ENCODE measurements at regions of chr21 and their contacts with region 1.

Region 1: GRCh38 chr21:16534408-16535101 is 804.8 kb downstream of the USP25 start:
- DNase-seq: peak; percentile 48
- H3K4me3 ChIP-seq: peak overlapping the region; percentile 31 to 40
- H3K27ac ChIP-seq: peak overlapping the region; percentile 78
- H3K4me1 ChIP-seq: no peaks in the 10 kb centered on the region
- H3K27me3 ChIP-seq: no peaks in the 10 kb centered on the region
- CTCF ChIP-seq: no peak
- POLR2A ChIP-seq: no peak

Region 2: DNA sequence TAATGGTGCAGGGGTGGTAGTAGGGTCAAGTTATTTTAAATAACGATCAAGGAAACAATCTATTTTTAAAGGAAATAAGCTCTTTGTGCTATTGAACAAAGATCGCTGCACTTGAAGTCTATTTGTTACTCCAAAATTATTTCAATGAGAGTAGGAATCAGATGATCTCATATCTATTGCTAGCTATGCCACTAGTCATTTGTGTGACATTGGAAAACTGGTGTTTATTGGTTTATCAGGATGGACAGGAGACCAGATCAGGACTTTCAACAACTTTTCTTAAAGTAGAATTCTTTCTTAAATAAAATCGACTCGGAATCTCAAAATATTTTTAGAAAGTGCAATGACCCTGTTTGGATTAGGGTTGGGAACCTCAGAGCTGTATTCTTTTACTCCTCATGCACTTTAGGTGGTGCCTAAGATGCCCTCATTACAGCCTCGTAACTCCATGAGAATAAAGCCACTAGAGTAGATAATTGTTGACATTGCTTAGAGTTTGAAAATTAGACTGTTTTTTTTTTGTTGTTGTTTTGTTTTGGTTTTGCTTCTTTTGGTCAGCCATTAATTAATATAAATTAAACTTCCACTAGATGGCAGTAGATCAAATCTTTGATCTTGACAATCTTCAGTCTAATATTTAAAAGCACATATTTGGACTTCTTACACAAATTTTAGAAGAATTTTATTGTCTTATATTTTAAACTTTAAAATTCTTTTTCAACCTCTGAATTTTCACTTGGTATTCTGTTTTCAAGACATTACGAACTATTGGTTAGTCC is 452.3 kb before region 1 on chr21:
- intact Hi-C with region 1: loop called (anchors 2 kb)
- DNase-seq: no peak
- H3K4me3 ChIP-seq: no peak overlapping the region
- H3K27ac ChIP-seq: peak overlapping the region; percentile 46 to 56
- H3K4me1 ChIP-seq: no peaks in the 10 kb centered on the region
- H3K27me3 ChIP-seq: no peaks in the 10 kb centered on the region
- CTCF ChIP-seq: peak in 3 of 4 experiments; percentile 41 to 70 (median 47)
- POLR2A ChIP-seq: no peak

Region 3: GRCh38 chr21:16194095-16194787 is 340.3 kb before region 1 on chr21:
- intact Hi-C with region 1: loop called (anchors 10 kb)
- DNase-seq: peak; percentile 59
- H3K4me3 ChIP-seq: peak overlapping the region; percentile 24 to 36
- H3K27ac ChIP-seq: peak overlapping the region; percentile 69 to 78
- H3K4me1 ChIP-seq: no peaks in the 10 kb centered on the region
- H3K27me3 ChIP-seq: no peaks in the 10 kb centered on the region
- CTCF ChIP-seq: no peak
- POLR2A ChIP-seq: no peak

Region 4: DNA sequence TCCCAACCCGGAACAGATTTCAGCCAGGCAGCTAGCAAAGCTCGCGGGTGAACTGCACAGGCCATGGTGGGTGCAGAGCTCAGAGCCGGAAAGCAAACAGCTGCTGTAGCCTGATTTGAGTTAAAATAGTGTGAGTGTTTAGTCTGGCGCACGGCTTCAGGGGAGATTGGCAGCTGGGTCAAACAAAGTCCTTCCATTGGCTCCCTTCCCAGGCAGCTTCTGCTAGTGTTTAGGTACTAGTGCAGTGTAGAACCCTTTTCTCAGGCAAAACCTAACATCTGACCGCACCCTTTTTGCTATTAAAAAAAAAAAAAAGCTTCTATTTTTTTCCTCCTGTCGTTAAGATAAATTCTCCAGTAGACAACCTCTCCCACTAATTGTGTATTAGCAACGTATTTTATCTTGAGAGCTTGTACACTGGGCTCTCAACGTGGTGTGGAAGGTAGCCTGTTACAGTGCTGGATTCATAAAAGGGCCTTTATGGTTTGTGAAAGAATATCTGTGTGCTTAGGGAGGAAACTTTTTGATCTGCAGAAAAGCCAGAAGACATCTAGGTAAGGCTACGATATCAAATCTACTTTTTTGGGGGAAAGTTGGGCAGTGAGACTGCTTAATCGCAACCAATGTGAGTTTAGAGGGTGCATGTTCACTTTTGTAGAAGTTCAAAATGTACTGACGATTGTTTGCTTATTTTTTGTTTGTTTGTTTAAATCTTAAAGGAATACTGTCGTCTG is 115.2 kb before region 1 on chr21:
- intact Hi-C with region 1: loop called (anchors 5 kb)
- DNase-seq: peak; percentile 68
- H3K4me3 ChIP-seq: peak overlapping the region; percentile 35 to 37
- H3K27ac ChIP-seq: peak overlapping the region; percentile 74 to 79
- H3K4me1 ChIP-seq: no peaks in the 10 kb centered on the region
- H3K27me3 ChIP-seq: no peaks in the 10 kb centered on the region
- CTCF ChIP-seq: no peak
- POLR2A ChIP-seq: no peak

Region 5: DNA sequence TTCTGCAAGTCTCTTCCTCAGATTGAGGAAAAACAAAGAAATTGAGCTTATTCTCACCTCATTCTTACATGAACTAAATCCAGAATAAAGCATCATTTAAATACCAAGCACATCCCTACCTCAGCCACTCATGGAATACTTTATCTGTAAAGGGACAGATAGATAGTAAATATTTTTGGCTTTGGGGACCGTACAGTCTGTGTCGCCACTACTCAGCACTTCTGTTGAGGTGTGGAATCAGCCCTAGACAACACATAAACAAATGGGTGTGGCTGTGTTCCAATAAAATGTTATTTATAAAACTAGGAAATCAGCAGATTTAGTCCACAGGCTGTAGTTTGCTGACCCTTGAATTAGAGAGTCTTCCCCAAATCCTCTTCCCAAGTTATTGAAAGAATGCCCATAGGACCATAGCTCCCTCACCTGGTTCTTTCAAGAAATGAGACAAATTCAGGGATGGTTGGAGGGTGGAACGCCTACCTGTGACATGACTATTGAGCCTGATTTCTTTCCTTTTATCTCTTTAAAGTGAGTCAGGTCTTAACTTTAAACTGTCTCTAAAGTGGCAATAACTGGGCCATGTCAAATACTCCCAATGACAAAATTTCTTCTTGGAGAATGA is 73.8 kb after region 1 on chr21:
- intact Hi-C with region 1: no loop called
- DNase-seq: no peak
- H3K4me3 ChIP-seq: no peak overlapping the region
- H3K27ac ChIP-seq: no peak overlapping the region
- H3K4me1 ChIP-seq: no peaks in the 10 kb centered on the region
- H3K27me3 ChIP-seq: no peaks in the 10 kb centered on the region
- CTCF ChIP-seq: no peak
- POLR2A ChIP-seq: no peak

Measured in prostate gland (tissue), 2 donors.